Activated CD4-positive, alpha-beta T cell treated with anti-CD3 and anti-CD28 coated beads for 36 hours (primary cell): ENCODE measurements at regions of chr12 and their contacts with region 1.

Region 1: DNA sequence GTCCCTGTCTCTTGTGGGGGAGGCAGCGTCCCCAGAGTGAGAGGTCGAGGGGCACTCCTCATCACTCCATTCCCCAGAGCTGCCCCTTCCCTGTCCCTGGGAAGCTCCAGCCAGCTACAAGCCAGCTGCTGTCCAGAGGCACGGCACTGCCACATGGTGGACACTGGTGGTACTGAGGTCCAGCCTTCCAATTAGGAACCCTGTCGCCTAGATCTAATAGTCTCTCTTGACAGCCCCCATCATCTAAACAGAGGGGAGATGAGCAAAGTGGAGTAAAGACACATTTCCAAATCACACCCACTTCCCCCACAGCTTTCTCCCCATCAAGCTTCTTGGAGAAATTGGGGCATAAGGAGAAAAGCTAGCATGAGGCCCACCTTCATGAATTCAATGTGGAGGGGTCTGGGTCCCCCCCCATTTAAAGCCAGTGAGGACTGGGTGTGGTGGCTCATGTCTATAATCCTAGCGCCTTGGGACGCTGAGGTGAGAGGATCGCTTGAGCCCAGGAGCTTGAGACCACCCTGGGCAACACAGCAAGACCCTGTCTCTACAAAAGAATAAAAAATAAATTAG is 2.1 kb upstream of the INHBE start:
- DNase-seq: peak; percentile 81
- ATAC-seq: peak; percentile 45
- H3K4me3 Mint-ChIP-seq: peak overlapping the region; percentile 31
- H3K27ac Mint-ChIP-seq: peak overlapping the region; percentile 47
- H3K4me1 Mint-ChIP-seq: peaks cover 31% of the 10 kb centered on the region
- H3K27me3 Mint-ChIP-seq: no peaks in the 10 kb centered on the region

Region 2: GRCh38 chr12:57213058-57213715 is 239.8 kb before region 1 on chr12:
- CTCF ChIA-PET with region 1: interaction called, 16 read pairs
- POLR2A ChIA-PET with region 1: no interaction called
- intact Hi-C with region 1: loop called in 1 of 2 experiments (anchors 2 kb)
- DNase-seq: peak; percentile 92
- ATAC-seq: peak; percentile 69
- H3K4me3 Mint-ChIP-seq: no peak overlapping the region
- H3K27ac Mint-ChIP-seq: no peak overlapping the region
- H3K4me1 Mint-ChIP-seq: peaks cover 25% of the 10 kb centered on the region
- H3K27me3 Mint-ChIP-seq: peaks cover 38% of the 10 kb centered on the region

Region 3: DNA sequence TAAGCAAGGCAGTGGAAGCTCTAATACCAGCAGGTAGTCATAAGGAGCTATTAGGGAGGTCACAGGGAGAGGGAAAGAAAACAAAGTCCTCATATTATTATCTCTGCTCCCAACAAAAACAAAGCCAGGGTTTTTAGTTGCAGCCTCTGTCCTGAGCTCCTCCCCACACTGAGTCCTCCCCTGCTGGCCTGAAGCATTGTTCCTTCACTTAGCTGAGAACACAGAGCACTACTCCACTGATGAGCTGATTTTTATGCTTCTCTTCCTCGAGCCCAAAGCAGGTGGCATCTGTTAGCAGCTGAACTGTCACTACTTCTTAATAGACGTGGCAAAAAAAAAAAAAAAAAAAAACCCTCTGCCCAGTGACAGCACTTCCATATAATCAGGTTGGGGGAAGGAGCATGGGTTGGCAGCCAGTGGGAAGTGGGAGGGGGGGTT is 191.6 kb before region 1 on chr12:
- CTCF ChIA-PET with region 1: interaction called, 13 read pairs
- POLR2A ChIA-PET with region 1: no interaction called
- intact Hi-C with region 1: loop called (anchors 1 to 2 kb)
- DNase-seq: no peak
- ATAC-seq: no peak
- H3K4me3 Mint-ChIP-seq: no peak overlapping the region
- H3K27ac Mint-ChIP-seq: no peak overlapping the region
- H3K4me1 Mint-ChIP-seq: peaks cover 3% of the 10 kb centered on the region
- H3K27me3 Mint-ChIP-seq: no peaks in the 10 kb centered on the region

Region 4: GRCh38 chr12:57270966-57271470 is 182.0 kb before region 1 on chr12:
- CTCF ChIA-PET with region 1: interaction called, 13 read pairs
- POLR2A ChIA-PET with region 1: interaction called, 4 read pairs
- intact Hi-C with region 1: no loop called
- DNase-seq: no peak
- ATAC-seq: no peak
- H3K4me3 Mint-ChIP-seq: no peak overlapping the region
- H3K27ac Mint-ChIP-seq: no peak overlapping the region
- H3K4me1 Mint-ChIP-seq: peaks cover 14% of the 10 kb centered on the region
- H3K27me3 Mint-ChIP-seq: no peaks in the 10 kb centered on the region

Region 5: DNA sequence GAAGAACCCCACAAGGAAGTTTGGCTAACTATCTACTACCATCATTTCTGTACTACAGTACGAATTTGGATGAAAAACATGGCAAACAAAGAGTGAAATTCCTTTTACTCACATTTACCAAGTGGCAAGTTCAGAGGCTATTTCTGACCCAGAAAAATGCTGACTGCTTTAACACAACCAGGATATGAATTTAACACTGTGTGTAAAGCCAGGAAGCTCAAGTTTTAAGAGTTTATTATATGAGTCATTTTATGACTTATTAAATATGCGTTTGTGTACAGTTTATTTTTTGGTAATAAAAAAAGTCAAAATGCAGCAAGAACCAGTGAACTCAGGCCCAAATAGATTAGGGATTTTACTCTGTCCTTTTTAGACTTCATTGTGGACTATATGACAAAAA is 143.6 kb before region 1 on chr12:
- CTCF ChIA-PET with region 1: interaction called, 63 read pairs
- POLR2A ChIA-PET with region 1: no interaction called
- intact Hi-C with region 1: loop called (anchors 1 to 2 kb)
- DNase-seq: no peak
- ATAC-seq: no peak
- H3K4me3 Mint-ChIP-seq: no peak overlapping the region
- H3K27ac Mint-ChIP-seq: no peak overlapping the region
- H3K4me1 Mint-ChIP-seq: no peaks in the 10 kb centered on the region
- H3K27me3 Mint-ChIP-seq: no peaks in the 10 kb centered on the region

Region 6: DNA sequence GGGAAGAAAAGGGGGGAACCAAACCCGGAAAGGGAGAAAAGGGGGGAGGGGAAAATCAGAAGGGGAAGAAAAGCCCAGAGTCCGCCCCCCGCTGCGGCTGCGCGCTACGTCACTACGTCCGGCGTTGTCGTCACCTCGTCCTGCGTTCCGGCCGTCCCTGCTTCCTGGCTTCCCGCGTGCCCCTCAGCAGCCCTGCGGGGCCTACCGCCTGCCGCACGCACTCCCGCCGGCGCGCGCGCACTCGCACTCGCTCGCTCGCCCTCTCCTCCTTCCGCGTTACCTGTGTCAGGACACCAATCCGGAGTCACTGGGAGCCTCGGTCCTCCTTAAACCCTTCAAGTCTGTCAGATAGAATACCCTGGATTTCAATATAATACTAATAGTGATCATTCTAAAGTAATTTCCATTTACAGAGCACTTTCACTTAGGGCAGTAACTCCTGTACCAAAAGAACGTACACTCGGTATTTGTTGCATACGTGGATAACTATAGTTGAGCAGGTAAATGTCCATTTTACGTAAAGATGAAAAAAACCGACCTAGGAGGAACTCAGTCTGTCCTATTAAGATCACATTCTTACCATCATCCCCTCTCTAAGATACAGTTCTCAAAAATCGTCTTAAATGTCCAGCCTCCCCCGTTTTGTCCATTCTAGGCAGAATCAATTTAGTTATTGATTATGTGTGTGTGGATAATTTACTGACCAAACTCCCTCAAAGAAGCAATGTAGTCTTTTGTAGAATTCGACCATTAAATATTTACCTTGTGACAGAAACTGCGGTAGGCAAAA is 21.9 kb before region 1 on chr12 and contains the start of gene R3HDM2:
- CTCF ChIA-PET with region 1: interaction called, 23 read pairs
- POLR2A ChIA-PET with region 1: no interaction called
- intact Hi-C with region 1: loop called in 1 of 2 experiments (anchors 2 kb)
- DNase-seq: peak; percentile 97
- ATAC-seq: peak; percentile 95
- H3K4me3 Mint-ChIP-seq: peak within 1 kb of the TSS; percentile 89
- H3K27ac Mint-ChIP-seq: peak within 1 kb of the TSS; percentile 100
- H3K4me1 Mint-ChIP-seq: peaks cover 35% of the 10 kb centered on the region
- H3K27me3 Mint-ChIP-seq: no peaks in the 10 kb centered on the region
- total RNA-seq, gene R3HDM2: 45.9 to 52.5 TPM

Region 7: DNA sequence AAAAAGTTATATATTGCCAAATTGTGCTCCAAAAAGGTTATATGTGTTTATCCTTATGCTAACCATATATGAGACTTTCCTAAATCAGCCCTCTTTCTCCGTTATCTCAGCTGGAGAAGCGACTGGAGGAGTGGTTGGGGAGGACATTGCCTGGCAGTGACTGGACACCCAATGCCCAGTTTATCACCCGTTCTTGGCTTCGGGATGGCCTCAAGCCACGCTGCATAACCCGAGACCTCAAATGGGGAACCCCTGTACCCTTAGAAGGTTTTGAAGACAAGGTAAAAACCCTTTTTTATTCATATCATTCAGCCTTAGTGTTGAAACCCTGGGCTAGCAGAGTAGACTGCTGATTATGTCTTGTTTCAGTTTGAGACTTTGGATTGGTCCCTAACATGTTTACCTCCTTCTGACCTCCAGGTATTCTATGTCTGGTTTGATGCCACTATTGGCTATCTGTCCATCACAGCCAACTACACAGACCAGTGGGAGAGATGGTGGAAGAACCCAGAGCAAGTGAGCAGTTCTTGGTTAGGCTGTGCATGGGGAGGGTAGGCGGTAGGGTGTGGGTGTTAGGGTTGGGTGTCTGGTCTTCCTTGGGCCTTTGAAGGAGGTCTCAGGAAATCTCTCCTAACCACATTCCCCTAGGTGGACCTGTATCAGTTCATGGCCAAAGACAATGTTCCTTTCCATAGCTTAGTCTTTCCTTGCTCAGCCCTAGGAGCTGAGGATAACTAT is 58.7 kb after region 1 on chr12:
- CTCF ChIA-PET with region 1: no interaction called
- POLR2A ChIA-PET with region 1: no interaction called
- intact Hi-C with region 1: no loop called
- DNase-seq: no peak
- ATAC-seq: no peak
- H3K4me3 Mint-ChIP-seq: no peak overlapping the region
- H3K27ac Mint-ChIP-seq: peak overlapping the region; percentile 78
- H3K4me1 Mint-ChIP-seq: peaks cover under 1% of the 10 kb centered on the region
- H3K27me3 Mint-ChIP-seq: no peaks in the 10 kb centered on the region

Region 8: GRCh38 chr12:57751788-57752667 is 299.0 kb after region 1 on chr12 and contains the start of gene CDK4:
- CTCF ChIA-PET with region 1: no interaction called
- POLR2A ChIA-PET with region 1: no interaction called
- intact Hi-C with region 1: no loop called
- DNase-seq: peak; percentile 99
- ATAC-seq: peak; percentile 77
- H3K4me3 Mint-ChIP-seq: peak within 1 kb of the TSS; percentile 100
- H3K27ac Mint-ChIP-seq: peak within 1 kb of the TSS; percentile 99
- H3K4me1 Mint-ChIP-seq: peaks cover 56% of the 10 kb centered on the region
- H3K27me3 Mint-ChIP-seq: no peaks in the 10 kb centered on the region
- total RNA-seq, gene CDK4: 132 to 208 TPM